WTC11 (cell line): ENCODE measurements at regions of chr6 and their contacts with region 1.

Region 1: GRCh38 chr6:91387290-91388062 is 800.6 kb upstream of the MAP3K7 start:
- DNase-seq: peak; percentile 71
- ATAC-seq: peak; percentile 100
- H3K4me3 Mint-ChIP-seq: no peak overlapping the region
- H3K27ac Mint-ChIP-seq: no peak overlapping the region
- H3K4me1 Mint-ChIP-seq: no peaks in the 10 kb centered on the region; the same call in 1 of the 2 replicates
- H3K27me3 Mint-ChIP-seq: no peaks in the 10 kb centered on the region
- CTCF ChIP-seq: peak; percentile 34; the same call in 1 of the 2 replicates

Region 2: DNA sequence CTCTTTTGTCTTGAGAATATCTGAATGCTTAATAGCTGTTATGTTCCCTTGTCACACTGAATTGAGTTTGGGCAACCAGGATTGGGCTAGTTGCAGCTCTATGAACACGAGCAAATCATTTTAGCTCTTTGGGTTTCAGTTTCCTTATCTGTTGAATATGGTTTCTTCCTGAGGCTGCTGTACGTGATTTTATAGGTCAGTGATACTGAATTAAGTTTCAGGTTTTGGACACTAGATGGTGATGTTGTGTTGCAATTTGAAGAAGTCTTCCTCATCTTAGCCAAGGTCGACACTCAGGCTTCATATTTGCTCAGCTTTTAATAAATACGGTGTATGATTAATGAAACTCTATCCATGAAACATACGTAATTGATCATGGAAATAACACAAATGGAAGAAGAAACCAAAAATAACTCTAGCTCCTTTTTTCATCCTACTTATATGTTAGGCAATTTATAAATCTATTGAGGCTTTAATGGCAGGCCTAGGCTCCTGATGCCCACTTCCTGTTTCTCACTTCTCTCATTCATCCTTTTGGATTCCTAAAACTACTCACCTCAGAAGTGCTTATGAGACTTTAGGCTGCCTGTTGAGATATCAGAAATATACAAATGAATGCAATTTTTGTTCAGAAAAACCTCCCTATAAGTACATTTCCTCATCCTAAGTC is 446.5 kb before region 1 on chr6:
- CTCF ChIA-PET with region 1: interaction called, 12 read pairs
- POLR2A ChIA-PET with region 1: no interaction called
- DNase-seq: no peak
- ATAC-seq: peak; percentile 76
- H3K4me3 Mint-ChIP-seq: no peak overlapping the region
- H3K27ac Mint-ChIP-seq: no peak overlapping the region
- H3K4me1 Mint-ChIP-seq: peaks cover 46% of the 10 kb centered on the region
- H3K27me3 Mint-ChIP-seq: peaks cover 37% of the 10 kb centered on the region
- CTCF ChIP-seq: peak; percentile 43; the same call in 1 of the 2 replicates

Region 3: GRCh38 chr6:91081452-91082067 is 305.9 kb before region 1 on chr6:
- CTCF ChIA-PET with region 1: interaction called, 31 read pairs
- POLR2A ChIA-PET with region 1: no interaction called
- DNase-seq: no peak
- ATAC-seq: peak; percentile 51
- H3K4me3 Mint-ChIP-seq: no peak overlapping the region
- H3K27ac Mint-ChIP-seq: no peak overlapping the region
- H3K4me1 Mint-ChIP-seq: peaks cover 28% of the 10 kb centered on the region
- H3K27me3 Mint-ChIP-seq: no peaks in the 10 kb centered on the region
- CTCF ChIP-seq: peak; percentile 46

Region 4: DNA sequence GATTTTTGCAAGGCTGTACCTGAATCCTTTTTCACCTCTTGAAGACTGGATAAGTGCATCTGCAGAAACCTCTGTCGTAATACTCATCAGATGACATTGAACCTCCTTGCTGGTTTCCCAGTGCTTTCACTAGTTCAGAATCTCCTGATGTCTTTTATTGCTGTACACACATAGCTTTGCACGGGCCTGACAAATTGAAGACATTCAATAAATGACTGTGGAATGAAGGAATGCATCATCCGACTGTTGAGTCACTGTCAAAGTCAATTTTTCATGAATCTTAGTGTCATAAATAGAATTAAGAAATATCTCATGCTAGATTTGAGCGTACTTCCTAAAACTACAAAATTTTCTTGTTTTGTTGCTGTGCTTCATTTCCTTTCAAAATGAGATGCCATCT is 202.4 kb before region 1 on chr6:
- CTCF ChIA-PET with region 1: no interaction called
- POLR2A ChIA-PET with region 1: no interaction called
- DNase-seq: no peak
- ATAC-seq: no peak
- H3K4me3 Mint-ChIP-seq: no peak overlapping the region
- H3K27ac Mint-ChIP-seq: no peak overlapping the region
- H3K4me1 Mint-ChIP-seq: no peaks in the 10 kb centered on the region
- H3K27me3 Mint-ChIP-seq: no peaks in the 10 kb centered on the region
- CTCF ChIP-seq: no peak

Region 5: DNA sequence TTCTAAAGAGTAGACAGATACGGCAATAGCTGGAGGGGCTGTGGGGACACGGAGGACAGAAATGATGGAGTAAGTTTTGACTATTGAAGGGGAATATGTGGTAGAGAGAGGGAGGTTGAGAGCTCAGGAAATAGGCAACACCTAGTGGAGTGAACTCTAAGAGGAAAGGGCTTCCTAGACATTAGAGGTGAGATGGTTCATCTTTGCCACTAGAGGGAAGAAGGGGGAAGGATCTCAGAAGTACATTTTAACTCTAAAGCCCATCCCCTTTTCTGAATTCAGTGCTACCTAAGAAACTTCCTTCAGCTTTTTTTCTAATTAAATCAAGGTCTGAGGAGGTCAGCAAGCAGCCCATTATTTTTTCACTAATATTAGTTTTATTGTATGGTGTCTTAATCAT is 111.2 kb before region 1 on chr6:
- CTCF ChIA-PET with region 1: interaction called, 14 read pairs
- POLR2A ChIA-PET with region 1: no interaction called
- DNase-seq: no peak
- ATAC-seq: peak; percentile 89
- H3K4me3 Mint-ChIP-seq: no peak overlapping the region
- H3K27ac Mint-ChIP-seq: no peak overlapping the region
- H3K4me1 Mint-ChIP-seq: peaks cover 24% of the 10 kb centered on the region
- H3K27me3 Mint-ChIP-seq: peaks cover 26% of the 10 kb centered on the region
- CTCF ChIP-seq: peak; percentile 50

Region 6: GRCh38 chr6:91288741-91289140 is 98.7 kb before region 1 on chr6:
- CTCF ChIA-PET with region 1: no interaction called
- POLR2A ChIA-PET with region 1: no interaction called
- DNase-seq: no peak
- ATAC-seq: no peak
- H3K4me3 Mint-ChIP-seq: no peak overlapping the region
- H3K27ac Mint-ChIP-seq: no peak overlapping the region
- H3K4me1 Mint-ChIP-seq: no peaks in the 10 kb centered on the region
- H3K27me3 Mint-ChIP-seq: peaks cover 99% of the 10 kb centered on the region
- CTCF ChIP-seq: no peak

Region 7: GRCh38 chr6:91534614-91535013 is 147.1 kb after region 1 on chr6:
- CTCF ChIA-PET with region 1: no interaction called
- POLR2A ChIA-PET with region 1: no interaction called
- DNase-seq: no peak
- ATAC-seq: no peak; the same call in 1 of the 2 replicates
- H3K4me3 Mint-ChIP-seq: no peak overlapping the region
- H3K27ac Mint-ChIP-seq: no peak overlapping the region
- H3K4me1 Mint-ChIP-seq: no peaks in the 10 kb centered on the region
- H3K27me3 Mint-ChIP-seq: no peaks in the 10 kb centered on the region
- CTCF ChIP-seq: no peak